HEK293T (cell line): ENCODE measurements at regions of chr3 and their contacts with region 1.

Region 1: GRCh38 chr3:12081826-12082225 is 76.9 kb downstream of the TIMP4 start:
- DNase-seq: no peak

Region 2: GRCh38 chr3:11666741-11667140 is 415.1 kb before region 1 on chr3:
- CTCF ChIA-PET with region 1: interaction called, 10 read pairs
- POLR2A ChIA-PET with region 1: no interaction called
- DNase-seq: no peak